Activated B cell treated with CpG ODN at 0.5 μM for 24 hours (primary cell): ENCODE measurements at regions of chr7 and their contacts with region 1.

Region 1: GRCh38 chr7:105352018-105352612 is 36.6 kb downstream of the SRPK2 start:
- DNase-seq: peak; percentile 40
- ATAC-seq: peak; percentile 88
- H3K4me3 Mint-ChIP-seq: peak overlapping the region; percentile 82
- H3K27ac Mint-ChIP-seq: peak overlapping the region; percentile 99
- H3K4me1 Mint-ChIP-seq: peaks cover 86% of the 10 kb centered on the region
- H3K27me3 Mint-ChIP-seq: no peaks in the 10 kb centered on the region
- CTCF ChIP-seq: no peak

Region 2: GRCh38 chr7:104943502-104944343 is 408.4 kb before region 1 on chr7:
- CTCF ChIA-PET with region 1: no interaction called
- POLR2A ChIA-PET with region 1: interaction called, 5 read pairs
- intact Hi-C with region 1: loop called (anchors 2 kb)
- DNase-seq: peak; percentile 53
- ATAC-seq: peak; percentile 9
- H3K4me3 Mint-ChIP-seq: peak overlapping the region; percentile 98
- H3K27ac Mint-ChIP-seq: peak overlapping the region; percentile 100
- H3K4me1 Mint-ChIP-seq: peaks cover 83% of the 10 kb centered on the region
- H3K27me3 Mint-ChIP-seq: no peaks in the 10 kb centered on the region
- CTCF ChIP-seq: no peak

Region 3: GRCh38 chr7:105325216-105325904 is 26.8 kb before region 1 on chr7:
- CTCF ChIA-PET with region 1: no interaction called
- POLR2A ChIA-PET with region 1: interaction called, 4 read pairs
- intact Hi-C with region 1: loop called (anchors 2 kb)
- DNase-seq: no peak
- ATAC-seq: peak; percentile 84
- H3K4me3 Mint-ChIP-seq: no peak overlapping the region
- H3K27ac Mint-ChIP-seq: peak overlapping the region; percentile 80
- H3K4me1 Mint-ChIP-seq: peaks cover 58% of the 10 kb centered on the region
- H3K27me3 Mint-ChIP-seq: no peaks in the 10 kb centered on the region
- CTCF ChIP-seq: no peak

Region 4: GRCh38 chr7:105365541-105366534 is 13.7 kb after region 1 on chr7:
- CTCF ChIA-PET with region 1: interaction called, 3 read pairs
- POLR2A ChIA-PET with region 1: interaction called, 7 read pairs
- intact Hi-C with region 1: loop called (anchors 2 kb)
- DNase-seq: no peak
- ATAC-seq: no peak
- H3K4me3 Mint-ChIP-seq: no peak overlapping the region
- H3K27ac Mint-ChIP-seq: peak overlapping the region; percentile 41
- H3K4me1 Mint-ChIP-seq: peaks cover 55% of the 10 kb centered on the region
- H3K27me3 Mint-ChIP-seq: no peaks in the 10 kb centered on the region
- CTCF ChIP-seq: no peak

Region 5: GRCh38 chr7:105522062-105522936 is 170.2 kb after region 1 on chr7 and contains the start of gene PUS7:
- CTCF ChIA-PET with region 1: no interaction called
- POLR2A ChIA-PET with region 1: no interaction called
- intact Hi-C with region 1: loop called (anchors 5 kb)
- DNase-seq: peak; percentile 73
- ATAC-seq: peak; percentile 94
- H3K4me3 Mint-ChIP-seq: peak within 1 kb of the TSS; percentile 93
- H3K27ac Mint-ChIP-seq: peak within 1 kb of the TSS; percentile 82
- H3K4me1 Mint-ChIP-seq: peaks cover 27% of the 10 kb centered on the region
- H3K27me3 Mint-ChIP-seq: no peaks in the 10 kb centered on the region
- CTCF ChIP-seq: no peak
- total RNA-seq, gene PUS7: 17.8 and 18.0 TPM in 2 replicates

Region 6: DNA sequence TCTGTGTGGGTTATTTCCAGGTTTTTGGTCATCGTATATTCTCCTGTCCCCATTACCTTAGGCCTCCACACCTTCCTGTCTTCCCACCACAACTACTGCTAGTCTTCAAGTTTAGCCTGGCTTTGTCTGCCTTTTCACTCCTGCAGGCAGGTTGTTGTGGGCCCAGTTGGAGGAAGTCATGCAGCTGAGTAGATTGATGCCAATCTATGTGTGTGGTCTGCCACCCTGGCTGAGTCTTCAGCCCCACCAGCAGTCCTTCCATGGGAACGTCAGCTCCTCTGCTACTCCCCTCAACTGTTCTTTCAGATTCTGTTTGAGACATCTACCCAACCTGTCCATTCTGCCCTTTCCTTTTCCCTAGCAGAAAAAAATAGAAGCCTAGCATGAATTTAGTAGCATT is 186.2 kb after region 1 on chr7:
- CTCF ChIA-PET with region 1: no interaction called
- POLR2A ChIA-PET with region 1: no interaction called
- intact Hi-C with region 1: no loop called
- DNase-seq: no peak
- ATAC-seq: no peak
- H3K4me3 Mint-ChIP-seq: no peak overlapping the region
- H3K27ac Mint-ChIP-seq: no peak overlapping the region
- H3K4me1 Mint-ChIP-seq: peaks cover 11% of the 10 kb centered on the region
- H3K27me3 Mint-ChIP-seq: no peaks in the 10 kb centered on the region
- CTCF ChIP-seq: no peak